CD4-positive, alpha-beta T cell (primary cell): ENCODE measurements at regions of chr1 and their contacts with region 1.

Region 1: DNA sequence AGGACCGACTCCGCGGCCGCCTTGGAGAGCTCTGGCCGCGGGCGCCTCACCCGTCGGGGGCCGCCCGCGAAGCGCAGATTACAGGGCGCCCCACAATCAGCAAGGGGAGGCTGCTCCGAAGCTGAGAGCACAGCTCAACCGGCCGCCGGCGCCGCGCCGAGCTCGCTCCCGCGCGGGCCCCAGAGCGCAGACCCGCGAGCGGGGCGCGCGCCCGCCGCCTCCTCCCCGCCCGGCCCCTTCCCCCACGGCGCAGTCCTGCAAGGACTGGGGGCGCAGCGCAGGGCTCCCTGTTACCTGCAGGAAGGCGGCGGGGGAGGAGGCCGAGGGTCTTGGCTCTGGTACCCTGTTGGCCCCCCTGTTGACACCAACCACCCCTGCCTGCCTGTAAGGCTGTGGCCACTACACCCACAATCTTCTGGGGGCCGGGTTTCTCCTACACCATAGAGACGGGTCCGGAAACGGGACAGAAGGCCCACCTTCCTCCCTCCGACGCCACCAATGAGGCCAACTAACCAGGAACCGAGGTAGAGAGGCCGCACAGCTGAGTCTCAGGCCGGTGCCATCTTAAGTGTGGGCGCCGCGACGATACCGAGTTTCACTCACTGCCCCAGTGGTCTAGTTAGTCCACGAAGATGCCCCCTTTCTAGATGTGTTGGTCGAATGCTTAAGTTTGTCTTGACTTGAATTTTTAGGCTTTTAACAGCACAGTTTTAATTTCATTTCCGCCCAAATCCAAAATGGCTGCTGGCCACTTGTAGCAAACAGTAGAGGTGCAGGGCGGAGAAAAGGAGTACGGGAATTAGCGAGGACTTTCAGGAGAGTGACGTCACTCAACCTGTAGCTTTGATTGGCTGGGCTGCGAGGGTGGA is at the start of gene SCYL3:
- DNase-seq: peak; percentile 78 to 97 (median 86)
- ATAC-seq: peak; percentile 82
- H3K4me3 ChIP-seq: peak within 1 kb of the TSS; percentile 79
- H3K4me3 Mint-ChIP-seq: peak within 1 kb of the TSS; percentile 97
- H3K27ac ChIP-seq: peak within 1 kb of the TSS; percentile 98 to 100
- H3K27ac Mint-ChIP-seq: peak within 1 kb of the TSS; percentile 99
- H3K4me1 ChIP-seq: peaks cover 23% of the 10 kb centered on the region
- H3K4me1 Mint-ChIP-seq: peaks cover 53% of the 10 kb centered on the region
- H3K27me3 ChIP-seq: no peaks in the 10 kb centered on the region
- H3K27me3 Mint-ChIP-seq: no peaks in the 10 kb centered on the region
- CTCF ChIP-seq: no peak
- total RNA-seq, gene SCYL3: 3.5 to 3.6 TPM

Region 2: GRCh38 chr1:167936068-167936929 is 1957.4 kb before region 1 on chr1 and contains the start of gene DCAF6:
- CTCF ChIA-PET with region 1: no interaction called
- POLR2A ChIA-PET with region 1: no interaction called
- intact Hi-C with region 1: loop called in 1 of 2 experiments (anchors 10 kb)
- DNase-seq: peak; percentile 93 to 100 (median 96)
- ATAC-seq: peak; percentile 81
- H3K4me3 ChIP-seq: peak within 1 kb of the TSS; percentile 95
- H3K4me3 Mint-ChIP-seq: peak within 1 kb of the TSS; percentile 94
- H3K27ac ChIP-seq: peak within 1 kb of the TSS; percentile 77 to 96
- H3K27ac Mint-ChIP-seq: peak within 1 kb of the TSS; percentile 99
- H3K4me1 ChIP-seq: peaks cover 5% of the 10 kb centered on the region
- H3K4me1 Mint-ChIP-seq: peaks cover 62% of the 10 kb centered on the region
- H3K27me3 ChIP-seq: no peaks in the 10 kb centered on the region
- H3K27me3 Mint-ChIP-seq: no peaks in the 10 kb centered on the region
- CTCF ChIP-seq: no peak
- total RNA-seq, gene DCAF6: 13.3 to 13.6 TPM

Region 3: DNA sequence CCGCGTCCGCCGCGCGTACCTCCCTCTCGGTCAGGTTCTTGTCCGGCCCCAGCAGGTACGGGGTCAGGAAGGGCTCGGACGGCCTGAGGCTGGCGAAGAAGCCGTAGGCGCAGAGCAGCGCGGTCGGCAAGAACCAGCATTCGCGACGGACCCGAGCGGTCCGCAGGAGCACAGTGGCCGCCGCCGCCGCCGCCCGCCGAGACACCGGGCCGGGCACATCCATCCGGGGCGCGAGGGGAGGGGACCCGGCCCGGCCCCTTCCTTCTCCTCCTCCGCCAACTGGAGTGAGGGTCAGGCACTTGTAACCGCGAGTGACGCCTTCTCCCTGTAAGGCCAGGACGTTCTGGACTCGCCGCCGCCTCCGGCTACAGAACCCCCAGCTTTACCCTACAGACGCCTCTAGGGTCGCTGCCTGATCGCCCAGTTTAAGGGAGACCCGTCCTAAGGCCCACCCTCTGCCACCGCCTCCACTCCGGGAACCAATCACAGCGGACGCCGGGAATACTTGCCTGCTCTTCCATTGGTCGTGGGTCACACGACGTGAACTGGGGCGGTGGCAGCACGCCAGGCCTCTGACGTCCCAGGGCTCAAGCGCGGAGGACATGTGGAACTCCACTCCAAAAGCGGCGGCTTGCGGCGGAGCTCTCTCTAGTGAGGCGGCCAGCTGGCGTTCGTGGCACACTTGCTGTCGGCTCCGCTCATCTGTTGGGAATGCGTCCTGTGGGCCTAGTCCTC is 408.0 kb before region 1 on chr1 and contains the start of gene SLC19A2:
- CTCF ChIA-PET with region 1: no interaction called
- POLR2A ChIA-PET with region 1: interaction called, 4 read pairs
- intact Hi-C with region 1: loop called in 1 of 2 experiments (anchors 5 kb)
- DNase-seq: peak; percentile 82 to 97 (median 90)
- ATAC-seq: peak; percentile 99
- H3K4me3 ChIP-seq: peak within 1 kb of the TSS; percentile 73
- H3K4me3 Mint-ChIP-seq: peak within 1 kb of the TSS; percentile 98
- H3K27ac ChIP-seq: peak within 1 kb of the TSS; percentile 54 to 65
- H3K27ac Mint-ChIP-seq: peak within 1 kb of the TSS; percentile 92
- H3K4me1 ChIP-seq: peaks cover 20% of the 10 kb centered on the region
- H3K4me1 Mint-ChIP-seq: peaks cover 48% of the 10 kb centered on the region
- H3K27me3 ChIP-seq: no peaks in the 10 kb centered on the region
- H3K27me3 Mint-ChIP-seq: no peaks in the 10 kb centered on the region
- CTCF ChIP-seq: peak; percentile 44
- total RNA-seq, gene SLC19A2: 3.6 to 3.7 TPM

Region 4: GRCh38 chr1:169711469-169712281 is 182.1 kb before region 1 on chr1 and contains the start of gene SELL:
- CTCF ChIA-PET with region 1: interaction called, 3 read pairs
- POLR2A ChIA-PET with region 1: interaction called, 3 read pairs
- intact Hi-C with region 1: loop called in 1 of 2 experiments (anchors 5 kb)
- DNase-seq: peak; percentile 53 to 90 (median 70)
- ATAC-seq: peak; percentile 67
- H3K4me3 ChIP-seq: peak within 1 kb of the TSS; percentile 58
- H3K4me3 Mint-ChIP-seq: peak within 1 kb of the TSS; percentile 93
- H3K27ac ChIP-seq: peak within 1 kb of the TSS; percentile 56 to 74
- H3K27ac Mint-ChIP-seq: no peak within 1 kb of the TSS
- H3K4me1 ChIP-seq: peaks cover 6% of the 10 kb centered on the region
- H3K4me1 Mint-ChIP-seq: peaks cover 22% of the 10 kb centered on the region
- H3K27me3 ChIP-seq: no peaks in the 10 kb centered on the region
- H3K27me3 Mint-ChIP-seq: no peaks in the 10 kb centered on the region
- CTCF ChIP-seq: peak; percentile 89
- total RNA-seq, gene SELL: 204 to 216 TPM

Region 5: DNA sequence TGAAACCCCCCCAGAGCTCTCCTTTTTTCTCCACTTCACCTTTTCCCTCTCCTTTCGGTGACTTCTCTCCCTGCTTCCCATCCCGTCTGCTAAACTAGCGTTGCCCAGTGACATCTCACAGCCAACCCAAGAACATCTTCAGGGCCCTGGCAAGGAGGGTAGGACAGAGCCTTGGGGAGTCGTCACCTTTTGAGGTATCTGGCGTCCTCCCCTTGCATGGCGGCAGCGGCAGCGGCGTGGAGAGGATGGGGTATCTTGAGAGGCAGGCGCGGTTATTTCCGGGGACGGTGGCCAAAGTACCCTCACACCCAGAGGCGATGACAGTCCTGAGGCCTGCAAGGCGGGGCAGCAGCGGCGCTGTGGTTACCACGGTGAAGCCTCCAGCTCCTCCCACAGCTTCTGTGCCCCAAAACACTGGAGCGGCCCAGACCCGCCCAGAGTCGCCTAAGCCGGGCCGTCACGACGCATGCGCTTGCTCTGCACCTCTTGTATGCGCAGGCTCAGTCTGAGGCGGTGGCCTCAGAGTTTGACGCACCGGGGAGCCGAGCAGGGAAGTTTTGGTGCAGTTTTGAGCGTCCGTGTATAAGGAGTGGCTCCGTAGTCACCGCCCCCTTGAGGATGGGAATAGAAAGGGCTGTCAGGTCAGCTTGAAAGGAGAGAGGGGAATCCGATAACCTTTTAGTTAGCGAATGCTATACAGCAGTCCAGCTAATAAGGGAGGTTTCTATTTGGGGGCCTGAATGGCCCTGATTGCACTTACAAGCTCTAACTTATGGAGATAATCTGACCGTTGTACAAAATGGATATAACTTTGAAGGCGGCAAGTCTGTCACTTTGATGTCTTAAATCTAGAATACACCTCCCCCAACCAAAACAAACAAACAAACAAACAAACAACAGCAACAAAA is 180.8 kb after region 1 on chr1 and contains the start of gene KIFAP3:
- CTCF ChIA-PET with region 1: interaction called, 4 read pairs
- POLR2A ChIA-PET with region 1: interaction called, 22 read pairs
- intact Hi-C with region 1: loop called (anchors 1 to 5 kb)
- DNase-seq: peak; percentile 88 to 99 (median 93)
- ATAC-seq: peak; percentile 95
- H3K4me3 ChIP-seq: peak within 1 kb of the TSS; percentile 83
- H3K4me3 Mint-ChIP-seq: peak within 1 kb of the TSS; percentile 97
- H3K27ac ChIP-seq: peak within 1 kb of the TSS; percentile 77 to 83
- H3K27ac Mint-ChIP-seq: peak within 1 kb of the TSS; percentile 85
- H3K4me1 ChIP-seq: peaks cover 15% of the 10 kb centered on the region
- H3K4me1 Mint-ChIP-seq: peaks cover 54% of the 10 kb centered on the region
- H3K27me3 ChIP-seq: no peaks in the 10 kb centered on the region
- H3K27me3 Mint-ChIP-seq: no peaks in the 10 kb centered on the region
- CTCF ChIP-seq: peak; percentile 69
- total RNA-seq, gene KIFAP3: 12.1 to 12.6 TPM

Region 6: GRCh38 chr1:171485375-171486047 is 1591.8 kb after region 1 on chr1 and contains the start of gene PRRC2C:
- CTCF ChIA-PET with region 1: interaction called, 4 read pairs
- POLR2A ChIA-PET with region 1: interaction called, 19 read pairs
- intact Hi-C with region 1: loop called in 1 of 2 experiments (anchors 10 kb)
- DNase-seq: peak; percentile 87 to 99 (median 93)
- ATAC-seq: peak; percentile 81
- H3K4me3 ChIP-seq: peak within 1 kb of the TSS; percentile 85
- H3K4me3 Mint-ChIP-seq: peak within 1 kb of the TSS; percentile 95
- H3K27ac ChIP-seq: peak within 1 kb of the TSS; percentile 100
- H3K27ac Mint-ChIP-seq: peak within 1 kb of the TSS; percentile 95
- H3K4me1 ChIP-seq: peaks cover 30% of the 10 kb centered on the region
- H3K4me1 Mint-ChIP-seq: peaks cover 50% of the 10 kb centered on the region
- H3K27me3 ChIP-seq: no peaks in the 10 kb centered on the region
- H3K27me3 Mint-ChIP-seq: no peaks in the 10 kb centered on the region
- CTCF ChIP-seq: peak; percentile 47
- total RNA-seq, gene PRRC2C: 357 to 387 TPM